Naive thymus-derived CD4-positive, alpha-beta T cell (primary cell): ENCODE measurements at regions of chr15 and their contacts with region 1.

Region 1: GRCh38 chr15:77186594-77187011 is 115.7 kb upstream of the TSPAN3 start:
- DNase-seq: peak in 3 of 9 donors; percentile 13 to 30 (median 18)
- ATAC-seq: no peak
- H3K4me3 ChIP-seq: no peak overlapping the region
- H3K4me3 Mint-ChIP-seq: no peak overlapping the region
- H3K27ac ChIP-seq: no peak overlapping the region
- H3K27ac Mint-ChIP-seq: no peak overlapping the region
- H3K4me1 ChIP-seq: peaks cover under 1 to 7% of the 10 kb centered on the region in 2 donors
- H3K4me1 Mint-ChIP-seq: peaks cover 12 to 57% (median 46%) of the 10 kb centered on the region in 7 donors
- H3K27me3 ChIP-seq: no peaks in the 10 kb centered on the region
- H3K27me3 Mint-ChIP-seq: no peaks in the 10 kb centered on the region

Region 2: GRCh38 chr15:77118882-77119321 is 67.7 kb before region 1 on chr15:
- CTCF ChIA-PET with region 1: interaction called, 3 read pairs
- POLR2A ChIA-PET with region 1: no interaction called
- intact Hi-C with region 1: loop called in 1 of 2 experiments (anchors 2 kb)
- DNase-seq: peak in 7 of 9 donors; percentile 19 to 63 (median 47)
- ATAC-seq: peak; percentile 70
- H3K4me3 ChIP-seq: no peak overlapping the region
- H3K4me3 Mint-ChIP-seq: no peak overlapping the region
- H3K27ac ChIP-seq: no peak overlapping the region
- H3K27ac Mint-ChIP-seq: no peak overlapping the region
- H3K4me1 ChIP-seq: no peaks in the 10 kb centered on the region
- H3K4me1 Mint-ChIP-seq: peaks cover 0 to 12% (median 6%) of the 10 kb centered on the region in 7 donors
- H3K27me3 ChIP-seq: no peaks in the 10 kb centered on the region
- H3K27me3 Mint-ChIP-seq: no peaks in the 10 kb centered on the region

Region 3: DNA sequence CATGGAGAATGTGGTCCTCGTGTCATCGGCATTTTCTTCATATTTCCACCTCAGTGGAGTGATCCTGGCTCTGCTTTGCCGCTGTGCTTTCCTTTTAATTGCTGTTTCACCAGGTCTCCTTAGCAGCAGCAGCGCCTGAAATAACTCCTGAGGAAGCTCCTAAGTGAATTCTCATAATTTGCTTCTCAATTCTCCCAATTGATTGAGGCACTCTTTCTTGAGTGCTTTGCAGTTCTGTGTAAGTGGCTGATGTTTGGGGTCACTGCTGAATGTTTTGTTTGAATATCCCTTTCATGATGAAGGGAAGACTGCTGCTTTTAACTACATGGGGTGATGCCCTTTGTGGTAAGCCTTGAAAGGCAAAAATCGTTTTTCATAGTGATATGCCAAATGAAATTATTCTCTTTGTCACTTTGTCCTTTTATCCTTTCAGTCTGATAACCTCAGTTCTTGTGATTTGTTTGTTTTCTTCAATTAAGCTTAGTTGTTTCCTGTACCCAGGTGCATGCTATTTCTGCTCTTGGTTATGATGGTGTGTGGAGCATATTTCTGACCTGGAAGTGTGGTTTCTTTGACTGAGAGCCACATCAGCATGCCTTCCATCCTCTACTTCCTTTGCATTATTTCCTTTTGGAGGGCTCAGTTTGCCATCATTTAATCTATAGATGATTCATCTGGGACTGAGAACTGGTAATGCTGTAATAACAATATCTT is 270.7 kb after region 1 on chr15:
- CTCF ChIA-PET with region 1: no interaction called
- POLR2A ChIA-PET with region 1: no interaction called
- intact Hi-C with region 1: no loop called
- DNase-seq: peak in 6 of 9 donors; percentile 1 to 34 (median 11)
- ATAC-seq: peak; percentile 20
- H3K4me3 ChIP-seq: no peak overlapping the region
- H3K4me3 Mint-ChIP-seq: peak overlapping the region; percentile 4 to 69 (median 40)
- H3K27ac ChIP-seq: no peak overlapping the region
- H3K27ac Mint-ChIP-seq: peak overlapping the region; percentile 2 to 74 (median 49)
- H3K4me1 ChIP-seq: peaks cover 11 to 25% of the 10 kb centered on the region in 2 donors
- H3K4me1 Mint-ChIP-seq: peaks cover 22 to 64% (median 49%) of the 10 kb centered on the region in 7 donors
- H3K27me3 ChIP-seq: no peaks in the 10 kb centered on the region
- H3K27me3 Mint-ChIP-seq: no peaks in the 10 kb centered on the region